ENCODE measurements at regions of chr2 and their contacts with region 1.

Region 1: DNA sequence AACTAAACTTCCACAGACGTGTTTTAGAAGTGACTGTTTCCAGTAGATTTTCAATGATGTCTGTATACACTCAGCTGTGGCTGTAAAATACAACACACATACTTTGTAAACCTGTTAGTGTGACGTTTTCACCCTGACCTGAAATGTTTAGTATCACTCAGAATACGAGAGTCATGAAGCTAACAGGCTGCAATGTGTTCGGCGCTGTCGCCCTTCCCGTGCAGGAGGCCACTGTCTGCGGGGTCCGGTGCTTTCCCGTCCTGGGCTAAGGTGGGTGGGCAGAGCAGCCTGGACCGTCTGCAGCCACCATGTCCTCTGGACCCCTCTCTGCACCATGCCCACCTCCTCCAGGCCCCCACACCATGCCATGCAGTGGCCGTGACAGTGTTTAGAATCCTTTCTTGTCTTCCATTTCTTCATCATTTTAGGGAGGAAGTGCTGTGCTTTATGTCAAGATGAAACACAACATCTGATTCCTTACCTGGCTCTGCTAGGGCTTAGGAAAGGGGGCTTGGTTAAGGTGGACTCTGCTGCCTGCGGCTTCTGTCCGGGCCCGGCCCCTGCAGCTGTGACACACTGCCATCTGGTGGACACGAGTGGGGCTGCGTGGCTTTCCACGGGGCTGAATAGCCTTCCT is 53.8 kb upstream of the RBM44 start:
- DNase-seq: peak; percentile 59 to 92 (median 79)
- H3K4me3 ChIP-seq: no peak overlapping the region
- H3K27ac ChIP-seq: no peak overlapping the region
- H3K4me1 ChIP-seq: peaks cover under 1 to 3% of the 10 kb centered on the region in 2 donors
- H3K27me3 ChIP-seq: no peaks in the 10 kb centered on the region
- CTCF ChIP-seq: peak; percentile 91 to 98 (median 96)
- POLR2A ChIP-seq: no peak

Region 2: DNA sequence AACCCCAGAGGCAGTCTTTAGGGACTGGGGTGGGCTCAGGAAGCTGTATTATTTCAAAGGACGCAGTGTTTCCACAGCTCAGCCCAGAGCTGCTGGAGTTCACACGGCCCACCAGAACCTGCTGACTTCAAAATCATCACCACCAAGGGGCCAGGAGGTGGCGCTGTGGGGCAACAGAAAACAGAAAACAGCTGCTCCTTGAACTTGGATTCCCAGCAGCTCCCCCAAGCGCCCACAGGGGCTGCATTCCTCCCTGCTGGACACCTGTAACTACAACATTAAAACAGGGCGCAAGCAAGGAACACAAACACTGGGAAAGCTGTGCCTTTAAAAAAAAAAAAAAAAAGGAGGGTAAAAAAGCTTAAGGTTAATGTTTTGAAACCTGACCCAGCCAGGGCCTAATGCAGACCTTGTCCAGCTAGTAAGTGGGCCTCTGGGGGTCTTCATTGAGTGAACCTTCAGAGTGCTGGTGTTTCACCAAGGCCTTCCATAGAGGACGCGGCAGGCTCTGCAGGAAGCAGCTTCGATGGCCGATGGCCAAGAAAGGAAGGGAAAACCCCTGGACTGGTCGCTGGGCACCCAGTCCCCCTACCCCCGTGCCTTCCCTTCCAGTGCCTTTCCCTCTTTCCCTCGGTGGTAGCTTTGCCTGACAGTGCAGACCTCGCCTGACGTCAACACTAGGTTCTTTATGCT is 231.8 kb before region 1 on chr2:
- intact Hi-C with region 1: loop called in 1 of 2 experiments (anchors 10 kb)
- DNase-seq: peak; percentile 80 to 95 (median 87)
- H3K4me3 ChIP-seq: no peak overlapping the region
- H3K27ac ChIP-seq: no peak overlapping the region
- H3K4me1 ChIP-seq: peaks cover 5 to 13% of the 10 kb centered on the region in 2 donors
- H3K27me3 ChIP-seq: no peaks in the 10 kb centered on the region
- CTCF ChIP-seq: peak; percentile 85 to 96 (median 92)
- POLR2A ChIP-seq: no peak

Region 3: GRCh38 chr2:237572021-237572741 is 172.6 kb before region 1 on chr2:
- intact Hi-C with region 1: loop called in 1 of 2 experiments (anchors 5 kb)
- DNase-seq: peak; percentile 90 to 95 (median 92)
- H3K4me3 ChIP-seq: no peak overlapping the region
- H3K27ac ChIP-seq: no peak overlapping the region
- H3K4me1 ChIP-seq: peaks cover 4 to 5% of the 10 kb centered on the region in 2 donors
- H3K27me3 ChIP-seq: no peaks in the 10 kb centered on the region
- CTCF ChIP-seq: peak; percentile 95 to 99 (median 98)
- POLR2A ChIP-seq: no peak

Region 4: DNA sequence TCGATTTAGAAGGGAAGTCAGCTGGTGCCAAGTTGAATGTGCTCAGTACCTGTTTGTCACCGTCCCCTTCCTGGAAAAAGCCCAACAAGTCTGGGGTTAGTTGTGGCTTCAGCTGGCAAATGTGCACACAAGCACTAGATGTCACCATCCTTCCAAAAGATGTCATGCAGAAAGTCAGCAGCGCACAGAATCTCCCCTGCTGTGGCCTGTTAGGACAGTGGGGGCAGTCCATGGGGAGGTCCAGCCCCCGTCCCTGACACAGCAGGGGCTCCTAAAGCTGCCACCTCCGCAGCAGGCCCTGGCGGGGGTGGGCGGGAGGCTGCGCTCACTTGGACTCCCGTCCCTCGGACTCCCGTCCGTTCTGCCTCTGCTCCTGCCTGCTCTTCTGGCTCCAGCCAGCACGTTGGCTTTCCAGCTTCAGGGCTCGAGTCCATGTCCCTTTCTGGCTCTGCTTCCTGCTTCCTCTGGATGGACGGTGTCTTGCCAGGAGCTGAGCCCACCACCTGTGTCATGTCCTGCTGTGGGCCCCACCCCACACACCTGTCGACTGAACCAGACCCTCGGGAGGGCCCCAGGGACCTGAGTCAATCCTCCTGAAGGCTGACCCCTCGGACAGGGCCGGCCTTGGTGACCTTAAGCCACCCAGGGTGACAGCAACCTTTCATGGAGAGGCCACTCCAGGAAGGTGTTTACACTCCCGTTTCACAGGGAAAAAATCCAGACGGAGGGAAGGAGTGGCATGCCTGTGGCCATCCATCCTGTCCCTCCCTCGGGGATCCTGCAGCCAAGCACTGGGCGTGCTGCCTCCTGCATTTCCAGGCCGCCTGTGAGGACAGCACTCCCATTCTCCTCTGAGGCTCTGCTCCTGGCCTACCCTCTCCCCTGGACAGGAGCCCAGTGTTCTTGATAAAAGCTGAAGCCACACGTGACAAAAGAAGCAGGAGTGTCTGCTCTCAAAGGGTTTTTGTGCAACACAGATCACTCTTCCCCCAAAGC is 162.7 kb before region 1 on chr2:
- intact Hi-C with region 1: loop called (anchors 2 to 5 kb)
- DNase-seq: peak; percentile 48 to 90 (median 74)
- H3K4me3 ChIP-seq: no peak overlapping the region
- H3K27ac ChIP-seq: peak overlapping the region in 2 of 5 donors; percentile 74 to 75
- H3K4me1 ChIP-seq: peaks cover 4 to 9% of the 10 kb centered on the region in 2 donors
- H3K27me3 ChIP-seq: no peaks in the 10 kb centered on the region
- CTCF ChIP-seq: peak; percentile 20 to 61 (median 52)
- POLR2A ChIP-seq: no peak

Region 5: DNA sequence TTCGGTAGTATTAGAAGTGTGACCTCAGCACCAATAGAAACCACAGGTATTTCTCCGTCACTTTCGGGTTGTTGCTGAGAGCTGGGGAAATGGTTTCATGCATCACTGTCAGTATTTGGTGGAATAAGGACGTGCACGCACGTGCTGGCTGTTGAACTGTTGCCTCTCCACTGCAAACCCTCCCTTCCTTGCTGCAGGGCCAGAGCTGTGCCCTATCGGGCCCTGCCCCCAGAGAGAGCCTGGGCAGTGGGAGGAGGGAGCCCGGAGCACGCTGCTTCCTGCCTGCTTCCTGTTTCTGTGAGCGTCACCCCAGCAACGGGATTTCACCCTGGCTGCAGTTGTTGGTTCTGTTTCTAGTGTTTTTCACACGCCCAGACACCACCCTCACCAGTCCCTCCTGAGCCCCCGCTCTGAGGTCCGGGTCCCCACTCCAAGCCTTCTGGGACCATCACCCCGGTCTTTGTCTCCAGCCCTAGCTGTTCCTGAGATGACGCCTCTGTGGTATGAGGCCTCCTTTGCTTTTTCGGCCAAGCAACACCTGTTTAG is 69.9 kb before region 1 on chr2:
- intact Hi-C with region 1: loop called (anchors 5 kb)
- DNase-seq: peak; percentile 70 to 91 (median 73)
- H3K4me3 ChIP-seq: peak overlapping the region in 1 of 4 donors; percentile 20
- H3K27ac ChIP-seq: peak overlapping the region in 3 of 5 donors; percentile 7 to 75 (median 42)
- H3K4me1 ChIP-seq: peaks cover 9 to 54% of the 10 kb centered on the region in 2 donors
- H3K27me3 ChIP-seq: no peaks in the 10 kb centered on the region
- CTCF ChIP-seq: peak in 4 of 6 experiments; percentile 16 to 26 (median 19)
- POLR2A ChIP-seq: no peak